IMR-90 (cell line): ENCODE measurements at regions of chr1 and their contacts with region 1.

Region 1: GRCh38 chr1:37682334-37682987 is 9.9 kb upstream of the CDCA8 start:
- DNase-seq: peak; percentile 61
- ATAC-seq: peak; percentile 98
- H3K4me3 ChIP-seq: no peak overlapping the region
- H3K27ac ChIP-seq: no peak overlapping the region
- H3K4me1 ChIP-seq: 0 out of 2 replicates have a peak, but pooled peaks cover 1% of the 10 kb centered on the region
- H3K27me3 ChIP-seq: peaks cover 4% of the 10 kb centered on the region
- CTCF ChIP-seq: peak; percentile 91
- POLR2A ChIP-seq: peak; percentile 37; the same call in 1 of the 2 replicates
- RAD21 ChIP-seq: peak; percentile 88

Region 2: GRCh38 chr1:36703526-36704208 is 978.8 kb before region 1 on chr1:
- CTCF ChIA-PET with region 1: no interaction called
- POLR2A ChIA-PET with region 1: no interaction called
- dilution Hi-C with region 1: no loop called
- in situ Hi-C with region 1: no loop called
- intact Hi-C with region 1: loop called (anchors 5 kb)
- DNase-seq: peak; percentile 49
- ATAC-seq: peak; percentile 99
- H3K4me3 ChIP-seq: no peak overlapping the region
- H3K27ac ChIP-seq: no peak overlapping the region
- H3K4me1 ChIP-seq: no peaks in the 10 kb centered on the region
- H3K27me3 ChIP-seq: no peaks in the 10 kb centered on the region
- CTCF ChIP-seq: peak; percentile 76
- POLR2A ChIP-seq: no peak
- RAD21 ChIP-seq: peak; percentile 78

Region 3: GRCh38 chr1:37455516-37455915 is 226.9 kb before region 1 on chr1:
- CTCF ChIA-PET with region 1: interaction called, 3 read pairs
- POLR2A ChIA-PET with region 1: no interaction called
- dilution Hi-C with region 1: no loop called
- in situ Hi-C with region 1: loop called (anchors 10 kb)
- intact Hi-C with region 1: loop called (anchors 1 kb)
- DNase-seq: no peak
- ATAC-seq: no peak
- H3K4me3 ChIP-seq: no peak overlapping the region
- H3K27ac ChIP-seq: no peak overlapping the region
- H3K4me1 ChIP-seq: peaks cover 4% of the 10 kb centered on the region
- H3K27me3 ChIP-seq: no peaks in the 10 kb centered on the region
- CTCF ChIP-seq: no peak
- POLR2A ChIP-seq: no peak
- RAD21 ChIP-seq: no peak

Region 4: DNA sequence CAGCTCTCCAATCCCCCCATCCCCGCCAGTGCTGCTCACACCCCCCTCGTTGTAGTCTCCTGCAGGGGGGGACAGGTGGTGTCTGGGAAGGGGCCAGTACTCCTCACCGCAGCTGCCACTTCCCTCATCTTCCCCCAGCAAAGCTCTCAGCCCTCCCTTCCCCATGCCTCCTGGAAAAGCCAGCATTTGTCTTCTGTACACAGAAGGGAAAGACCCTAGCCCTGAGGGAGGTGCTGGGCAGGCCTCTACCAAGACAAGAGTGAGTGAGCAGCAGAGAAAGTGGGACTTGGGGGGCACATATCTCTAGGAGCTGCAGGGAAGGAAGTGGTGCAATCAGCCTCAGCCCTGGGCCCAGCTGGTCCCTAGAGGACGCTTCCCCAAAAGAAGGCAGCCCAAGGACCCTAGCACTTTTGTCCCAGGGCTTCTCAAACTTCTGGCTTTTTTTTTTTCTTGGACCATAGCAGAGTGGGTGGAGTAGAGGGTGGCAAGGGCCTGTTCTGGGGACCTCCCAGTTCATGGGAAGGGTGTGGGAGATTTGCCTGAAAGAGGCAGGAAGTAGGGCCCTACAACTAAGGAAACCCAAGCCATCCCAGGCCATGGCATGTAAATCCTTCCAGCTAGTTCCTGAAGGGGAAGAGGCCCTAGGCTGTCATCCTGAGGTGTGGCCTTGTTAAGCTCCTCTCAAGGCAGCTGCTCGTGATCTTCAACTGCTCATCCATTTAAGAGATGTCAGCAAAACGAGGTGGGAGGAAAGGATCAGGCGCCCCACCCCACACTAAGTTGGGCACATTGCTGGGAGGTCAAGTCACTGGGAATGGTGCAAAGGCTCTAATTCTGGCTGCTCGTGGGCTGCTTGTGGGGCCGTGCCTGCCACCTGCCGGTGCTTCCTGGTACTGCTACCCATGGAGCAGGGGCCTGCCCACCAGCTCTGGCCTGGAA is 195.5 kb before region 1 on chr1:
- CTCF ChIA-PET with region 1: no interaction called
- POLR2A ChIA-PET with region 1: no interaction called
- dilution Hi-C with region 1: no loop called
- in situ Hi-C with region 1: no loop called
- intact Hi-C with region 1: loop called (anchors 1 kb)
- DNase-seq: peak; percentile 65
- ATAC-seq: peak; percentile 88
- H3K4me3 ChIP-seq: no peak overlapping the region
- H3K27ac ChIP-seq: peak overlapping the region; percentile 50; the same call in 1 of the 2 replicates
- H3K4me1 ChIP-seq: peaks cover 22% of the 10 kb centered on the region
- H3K27me3 ChIP-seq: no peaks in the 10 kb centered on the region
- CTCF ChIP-seq: peak; percentile 89
- POLR2A ChIP-seq: no peak
- RAD21 ChIP-seq: peak; percentile 81

Region 5: DNA sequence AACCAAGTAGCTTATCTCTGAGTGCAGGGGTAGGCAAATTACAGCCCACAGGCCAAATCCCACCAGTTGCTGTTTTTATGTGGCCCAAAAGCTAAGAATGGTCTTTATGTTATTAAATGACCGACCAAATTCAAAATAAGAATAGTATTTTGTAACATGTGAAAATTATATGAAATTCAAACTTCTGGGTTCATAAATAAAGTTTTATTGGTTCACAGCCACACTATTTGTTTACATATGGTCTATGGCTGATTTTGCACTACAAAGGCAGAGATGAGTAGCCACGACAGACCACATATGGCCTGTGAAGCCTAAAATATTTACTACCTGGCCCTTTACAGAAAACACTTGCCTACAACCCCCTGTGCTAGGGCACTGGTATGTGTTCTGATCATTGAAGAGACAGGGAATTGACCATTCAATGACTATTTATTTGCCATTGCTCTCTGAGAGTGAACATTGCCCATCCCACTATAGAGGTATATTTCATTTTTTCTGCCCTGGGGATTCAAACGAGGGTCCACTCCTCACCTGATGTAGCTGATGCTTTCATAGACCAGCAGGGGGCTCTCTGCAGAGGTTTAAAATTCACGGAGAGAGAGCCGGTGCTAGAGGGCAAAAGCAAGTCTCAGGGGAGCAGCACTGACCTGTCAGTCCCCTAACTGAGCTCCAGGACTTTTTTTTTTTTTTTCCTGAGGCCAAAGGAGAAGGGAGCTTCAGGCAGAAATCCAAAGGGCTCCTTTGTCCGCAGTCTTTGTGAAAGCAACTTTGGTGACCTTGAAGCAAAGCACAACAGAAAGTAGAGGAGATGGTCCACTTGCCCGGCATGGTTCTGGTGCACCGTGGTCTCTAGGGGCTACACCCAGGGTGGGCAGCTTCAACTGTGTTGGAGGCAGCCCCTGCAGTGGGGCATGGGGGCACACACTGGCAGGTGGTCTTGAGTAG is 79.4 kb before region 1 on chr1:
- CTCF ChIA-PET with region 1: interaction called, 27 read pairs
- POLR2A ChIA-PET with region 1: interaction called, 13 read pairs
- dilution Hi-C with region 1: no loop called
- in situ Hi-C with region 1: no loop called
- intact Hi-C with region 1: loop called (anchors 1 kb)
- DNase-seq: peak; percentile 16
- ATAC-seq: peak; percentile 70; the same call in 1 of the 2 replicates
- H3K4me3 ChIP-seq: no peak overlapping the region
- H3K27ac ChIP-seq: no peak overlapping the region
- H3K4me1 ChIP-seq: peaks cover 3% of the 10 kb centered on the region; the same call in 1 of the 2 replicates
- H3K27me3 ChIP-seq: peaks cover 26% of the 10 kb centered on the region
- CTCF ChIP-seq: peak; percentile 62
- POLR2A ChIP-seq: no peak
- RAD21 ChIP-seq: peak; percentile 48